ENCODE measurements at regions of chr5 and their contacts with region 1.

Region 1: DNA sequence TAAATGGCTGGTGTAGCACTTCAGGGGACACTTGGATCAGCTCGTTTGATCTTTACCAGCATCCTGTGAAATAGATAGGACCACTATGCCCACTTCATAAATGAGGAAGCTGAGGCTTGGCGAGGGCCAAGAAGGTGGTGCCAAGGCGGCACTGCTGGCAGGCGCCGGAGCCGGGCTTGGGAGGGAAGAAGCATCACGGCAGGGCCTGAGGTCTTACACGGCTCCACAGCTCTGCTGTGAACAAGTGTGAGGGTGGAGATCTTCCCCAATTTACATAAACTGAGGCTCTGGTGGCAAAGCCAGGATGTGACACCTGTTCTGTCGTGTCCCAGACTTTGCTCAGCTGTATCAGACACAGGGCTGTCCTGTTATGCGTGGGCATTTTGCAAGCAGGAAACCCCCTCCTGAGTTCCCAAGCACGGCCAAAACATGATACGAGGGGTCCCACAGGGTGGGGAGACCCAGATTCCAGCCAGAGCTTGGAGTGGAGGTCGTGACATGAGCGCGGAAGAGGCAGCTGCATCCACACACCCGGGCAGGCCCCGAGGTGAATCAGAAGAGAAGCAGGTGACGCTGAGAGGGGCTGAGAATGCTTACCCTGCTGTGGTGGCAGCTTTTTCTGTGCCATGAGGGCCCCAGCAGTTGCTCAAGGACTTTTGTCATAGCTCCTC is 117.5 kb upstream of the BOD1 start:
- DNase-seq: no peak
- H3K4me3 ChIP-seq: no peak overlapping the region
- H3K27ac ChIP-seq: no peak overlapping the region
- H3K4me1 ChIP-seq: peaks cover 0 to 41% of the 10 kb centered on the region in 2 experiments; a peak in 1 of 4 replicates
- H3K27me3 ChIP-seq: no peaks in the 10 kb centered on the region
- CTCF ChIP-seq: no peak
- EP300 ChIP-seq: no peak
- RAD21 ChIP-seq: no peak

Region 2: DNA sequence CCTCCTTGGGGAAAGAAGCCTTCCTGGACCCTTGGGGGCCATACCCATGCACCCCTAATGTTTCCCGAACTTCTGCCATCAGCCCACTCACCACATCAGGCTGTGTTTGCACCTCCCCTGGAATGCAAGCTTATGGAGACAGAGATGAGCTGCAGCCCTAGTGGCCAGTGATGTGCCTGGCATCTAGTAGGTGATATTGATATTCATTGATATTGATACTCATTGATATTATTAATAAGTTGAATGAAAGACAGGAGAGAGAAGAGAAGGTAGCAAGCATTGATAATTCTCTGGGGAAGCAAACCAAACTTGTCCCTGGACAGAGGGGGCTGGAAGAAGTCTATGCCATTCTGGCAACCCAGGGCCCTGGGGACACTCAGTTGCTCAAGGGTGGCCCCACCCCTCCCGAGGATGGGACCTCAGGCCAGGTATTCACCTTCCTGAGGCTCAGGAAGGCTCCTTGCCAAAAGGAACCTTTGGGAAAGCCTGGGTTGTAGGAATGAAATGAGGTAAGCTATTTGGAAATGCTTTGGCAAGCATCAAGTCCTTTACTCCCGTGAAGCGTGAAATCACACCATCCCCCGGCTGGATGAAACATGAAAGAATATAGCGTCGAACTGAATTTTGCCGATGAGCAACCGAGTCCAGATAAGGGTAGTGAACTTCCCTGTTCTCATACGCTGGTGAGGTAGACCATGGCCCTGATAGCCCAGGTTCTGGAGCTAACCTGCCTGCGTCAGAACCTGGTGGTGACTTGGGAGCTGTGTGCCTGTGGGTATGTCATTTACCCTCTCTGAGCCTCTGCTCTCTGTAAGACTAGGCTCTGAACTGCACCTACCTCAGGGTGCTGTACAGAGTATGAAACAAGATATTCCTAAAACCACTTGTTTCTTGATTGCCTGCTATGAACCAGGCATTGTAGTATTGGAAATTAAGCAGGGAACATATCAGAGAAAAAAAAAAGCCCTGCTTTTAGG is 12.4 kb before region 1 on chr5:
- CTCF ChIA-PET with region 1: interaction called, 35 read pairs
- POLR2A ChIA-PET with region 1: interaction called, 10 read pairs
- DNase-seq: no peak
- H3K4me3 ChIP-seq: no peak overlapping the region
- H3K27ac ChIP-seq: peak overlapping the region in 1 of 2 experiments; percentile 95; a peak in 2 of 4 replicates
- H3K4me1 ChIP-seq: peaks cover 0 to 50% of the 10 kb centered on the region in 2 experiments; a peak in 2 of 4 replicates
- H3K27me3 ChIP-seq: no peaks in the 10 kb centered on the region; the same call in 1 of the 2 replicates
- CTCF ChIP-seq: peak; percentile 17; the same call in 1 of the 2 replicates
- EP300 ChIP-seq: no peak
- RAD21 ChIP-seq: no peak

Region 3: DNA sequence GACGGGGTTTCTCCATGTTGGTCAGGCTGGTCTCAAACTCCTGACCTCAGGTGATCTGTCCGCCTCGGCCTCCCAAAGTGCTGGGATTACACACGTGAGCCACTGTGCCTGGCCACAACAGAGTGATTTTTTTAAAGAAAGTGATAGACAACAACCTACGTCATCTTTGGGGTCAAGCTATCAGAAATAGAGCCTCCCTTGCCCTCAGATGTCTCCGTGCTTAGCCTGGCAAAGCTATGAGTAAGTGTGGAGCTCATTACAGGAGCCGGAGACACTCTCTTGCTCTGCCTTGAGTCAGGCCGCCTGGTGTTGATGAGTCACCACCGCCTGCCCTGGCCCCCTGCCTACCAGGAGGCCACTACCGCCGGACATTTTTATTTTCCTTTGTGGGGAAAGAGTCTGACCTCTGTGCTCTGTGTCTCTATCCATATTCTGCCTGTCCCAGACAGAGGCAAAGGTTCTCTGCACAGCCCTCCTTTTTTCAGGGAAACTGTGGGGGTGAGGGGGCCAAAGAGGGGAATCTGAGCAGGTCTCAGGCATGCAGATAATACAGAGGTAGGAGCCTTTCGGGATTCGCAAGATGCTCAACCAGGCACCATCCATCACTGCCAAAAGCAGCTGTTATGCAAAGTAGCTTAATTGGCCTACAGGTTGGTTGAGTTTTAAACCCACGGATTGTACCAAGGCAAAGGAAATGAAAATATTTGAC is 30.5 kb after region 1 on chr5:
- CTCF ChIA-PET with region 1: no interaction called
- POLR2A ChIA-PET with region 1: no interaction called
- DNase-seq: no peak
- H3K4me3 ChIP-seq: no peak overlapping the region
- H3K27ac ChIP-seq: peak overlapping the region; percentile 37 to 69; a peak in 3 of 4 replicates
- H3K4me1 ChIP-seq: peaks cover 9 to 19% of the 10 kb centered on the region in 2 experiments; a peak in 2 of 4 replicates
- H3K27me3 ChIP-seq: no peaks in the 10 kb centered on the region
- CTCF ChIP-seq: no peak
- EP300 ChIP-seq: peak; percentile 16 to 66; a peak in 1 of 4 replicates
- RAD21 ChIP-seq: no peak

Region 4: DNA sequence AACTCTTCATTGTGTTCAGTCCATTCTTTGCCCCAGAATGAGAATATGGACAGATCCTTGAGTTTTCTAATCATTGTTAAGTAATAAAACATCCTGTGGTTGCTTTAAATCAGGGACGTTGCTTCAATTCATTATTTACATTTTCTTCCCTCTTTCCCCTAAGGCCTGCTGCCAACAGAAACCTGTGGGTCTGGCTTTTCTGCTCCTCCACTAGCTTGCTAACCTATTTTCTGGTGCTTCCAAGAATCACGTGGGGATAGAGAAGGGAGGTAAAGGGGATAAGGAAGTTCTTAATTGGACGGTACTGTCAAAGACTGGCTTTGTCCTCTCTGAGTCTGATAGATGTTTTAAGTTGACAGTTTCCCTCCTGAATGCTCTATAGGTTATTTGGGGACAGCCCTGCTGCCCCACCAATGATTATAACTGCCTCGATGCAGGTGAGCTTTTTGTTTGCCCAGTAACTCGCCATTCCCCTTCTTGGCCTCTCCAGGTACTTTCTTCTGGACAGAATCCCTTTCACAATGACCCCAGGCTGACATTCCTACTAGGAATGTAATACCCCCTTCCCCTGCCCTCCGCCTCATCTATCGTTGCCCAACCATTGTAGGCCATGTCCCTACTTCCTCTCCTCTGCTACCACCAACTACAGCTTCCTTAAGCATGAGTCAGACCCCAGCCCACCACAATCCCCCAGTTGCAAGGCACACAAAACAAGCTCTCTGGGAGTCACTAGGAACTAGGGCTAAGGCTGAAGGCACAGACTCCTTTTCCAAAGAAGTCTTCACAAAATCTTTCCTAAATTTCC is 134.3 kb after region 1 on chr5:
- CTCF ChIA-PET with region 1: no interaction called
- POLR2A ChIA-PET with region 1: no interaction called
- DNase-seq: no peak
- H3K4me3 ChIP-seq: no peak overlapping the region
- H3K27ac ChIP-seq: no peak overlapping the region
- H3K4me1 ChIP-seq: no peaks in the 10 kb centered on the region; a peak in 1 of 4 replicates
- H3K27me3 ChIP-seq: no peaks in the 10 kb centered on the region
- CTCF ChIP-seq: no peak
- EP300 ChIP-seq: no peak
- RAD21 ChIP-seq: no peak

Measured in SK-N-SH (cell line).